ENCODE measurements at regions of chr1 and their contacts with region 1.

Region 1: DNA sequence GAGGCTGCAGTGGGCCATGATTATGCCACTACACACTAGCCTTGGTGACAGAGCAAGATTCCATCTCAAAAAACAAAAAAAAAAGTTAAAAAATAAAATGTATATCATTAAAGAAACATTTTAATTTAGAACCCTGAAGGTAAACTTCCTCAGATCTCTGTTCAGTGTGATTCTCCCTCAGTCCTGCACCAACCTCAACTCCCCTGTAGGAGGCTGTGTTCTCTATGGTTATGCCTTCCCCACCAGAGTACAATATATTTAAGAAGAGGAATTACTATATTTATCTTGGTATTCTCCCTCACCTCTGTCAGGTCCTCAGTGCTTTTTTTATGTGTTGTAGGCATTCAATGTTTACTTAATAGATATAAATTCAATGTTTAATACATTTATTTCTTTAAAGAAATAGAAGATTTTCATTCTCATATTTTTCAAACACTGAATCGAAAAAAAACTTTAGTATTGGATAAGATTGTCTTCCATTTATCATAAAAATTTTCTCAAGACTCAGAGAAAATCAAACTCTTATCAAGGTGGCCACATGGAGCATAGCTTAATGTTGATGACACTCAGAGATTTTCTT is 4.8 kb upstream of the LRRC8B start:
- DNase-seq: no peak
- H3K4me3 ChIP-seq: no peak overlapping the region
- H3K27ac ChIP-seq: no peak overlapping the region
- H3K4me1 ChIP-seq: no peaks in the 10 kb centered on the region
- H3K27me3 ChIP-seq: no peaks in the 10 kb centered on the region
- CTCF ChIP-seq: peak; percentile 13 to 30 (median 27)
- POLR2A ChIP-seq: no peak

Region 2: DNA sequence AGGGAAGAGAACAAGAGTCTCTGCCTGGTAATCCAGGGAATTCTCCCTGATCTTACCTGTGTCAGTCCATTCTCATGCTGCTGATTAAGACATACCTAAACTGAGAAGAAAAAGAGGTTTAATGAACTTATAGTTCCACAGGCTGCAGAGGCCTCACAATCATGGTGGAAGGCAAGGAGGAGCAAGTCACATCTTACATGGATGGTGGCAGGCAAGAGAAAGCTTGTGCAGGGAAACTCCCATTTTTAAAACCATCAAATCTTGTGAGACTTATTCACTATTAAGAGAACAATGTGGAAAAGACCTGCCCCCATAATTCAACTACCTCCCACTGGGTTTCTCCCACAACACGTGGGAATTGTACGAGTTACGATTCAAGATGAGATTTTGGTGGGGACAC is 29.5 kb before region 1 on chr1:
- intact Hi-C with region 1: no loop called
- DNase-seq: no peak
- H3K4me3 ChIP-seq: no peak overlapping the region
- H3K27ac ChIP-seq: no peak overlapping the region
- H3K4me1 ChIP-seq: no peaks in the 10 kb centered on the region
- H3K27me3 ChIP-seq: no peaks in the 10 kb centered on the region
- CTCF ChIP-seq: no peak
- POLR2A ChIP-seq: no peak

Region 3: DNA sequence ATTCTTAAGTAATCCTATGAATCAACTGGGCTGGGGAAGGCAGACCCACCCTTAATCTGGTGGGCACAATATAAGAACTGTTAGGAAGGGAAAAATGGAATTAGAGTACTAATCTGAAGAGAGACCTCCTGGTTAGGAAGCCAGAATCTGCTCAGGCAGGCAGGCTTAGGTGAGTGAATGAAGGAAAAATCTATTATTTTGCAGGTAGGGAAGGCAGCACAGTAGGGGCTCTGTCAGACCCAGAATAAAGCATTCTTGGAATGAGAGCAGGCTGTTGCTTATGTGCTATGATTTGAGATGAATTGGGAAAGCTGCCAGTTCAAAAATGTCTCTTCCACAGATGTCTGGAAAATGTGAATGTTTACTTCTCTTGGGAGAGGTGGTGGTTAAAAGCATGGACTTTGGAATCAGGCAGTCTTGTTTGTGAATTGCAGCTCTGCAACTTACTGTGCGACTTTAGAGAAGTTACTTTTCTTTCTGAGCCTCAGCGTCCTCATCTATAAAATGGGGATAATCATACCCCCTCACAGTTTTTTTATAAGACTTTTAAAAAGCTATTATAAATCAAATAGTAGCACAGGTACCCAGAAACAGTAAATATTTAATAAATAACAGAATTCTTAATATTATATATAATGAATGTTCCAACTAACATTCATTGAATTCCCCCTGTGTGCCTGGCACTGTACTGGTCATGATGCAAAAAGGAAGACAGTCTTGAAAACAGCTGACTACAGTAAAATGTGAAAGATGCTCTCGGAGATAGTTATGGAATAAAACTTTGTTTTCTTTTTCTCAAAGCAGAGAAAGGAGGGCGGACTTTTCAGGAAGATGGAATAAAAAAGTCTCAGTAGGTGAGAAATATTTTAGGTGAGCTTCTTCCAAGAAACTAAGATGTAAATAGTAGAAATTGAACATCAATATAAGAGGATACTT is 1517.3 kb after region 1 on chr1:
- intact Hi-C with region 1: loop called (anchors 10 kb)
- DNase-seq: no peak
- H3K4me3 ChIP-seq: no peak overlapping the region
- H3K27ac ChIP-seq: no peak overlapping the region
- H3K4me1 ChIP-seq: no peaks in the 10 kb centered on the region
- H3K27me3 ChIP-seq: no peaks in the 10 kb centered on the region
- CTCF ChIP-seq: no peak
- POLR2A ChIP-seq: no peak

Measured in breast epithelium (tissue), 4 donors.